ENCODE measurements at regions of chr10 and their contacts with region 1.

Region 1: DNA sequence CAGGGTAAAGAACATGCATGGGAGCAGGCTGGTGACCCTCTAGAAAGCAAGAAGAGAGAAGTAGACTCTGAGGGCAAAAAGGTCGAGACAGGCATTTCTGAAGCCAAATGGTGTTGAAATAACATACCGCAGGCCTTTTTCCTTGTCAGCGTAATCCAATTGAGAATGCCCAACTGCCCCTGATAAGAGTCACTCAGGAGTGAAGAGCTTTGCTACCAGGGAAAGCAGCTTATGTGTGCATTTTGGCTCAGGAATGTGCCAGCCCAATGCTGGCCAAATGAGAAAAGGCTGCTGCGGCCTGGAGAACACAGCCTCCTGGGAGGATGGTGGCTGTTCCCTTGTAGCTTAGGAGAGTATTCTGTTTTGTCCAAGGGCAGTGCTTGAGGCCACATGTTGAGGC is 61.4 kb upstream of the NFKB2 start:
- DNase-seq: no peak
- H3K4me3 Mint-ChIP-seq: no peak overlapping the region
- H3K27ac Mint-ChIP-seq: no peak overlapping the region
- H3K4me1 Mint-ChIP-seq: peaks cover 9% of the 10 kb centered on the region
- H3K27me3 Mint-ChIP-seq: no peaks in the 10 kb centered on the region

Region 2: GRCh38 chr10:101693978-101694673 is 640.0 kb before region 1 on chr10:
- intact Hi-C with region 1: no loop called
- DNase-seq: peak; percentile 93
- H3K4me3 Mint-ChIP-seq: peak overlapping the region; percentile 98
- H3K27ac Mint-ChIP-seq: peak overlapping the region; percentile 99
- H3K4me1 Mint-ChIP-seq: peaks cover 24% of the 10 kb centered on the region
- H3K27me3 Mint-ChIP-seq: no peaks in the 10 kb centered on the region

Region 3: DNA sequence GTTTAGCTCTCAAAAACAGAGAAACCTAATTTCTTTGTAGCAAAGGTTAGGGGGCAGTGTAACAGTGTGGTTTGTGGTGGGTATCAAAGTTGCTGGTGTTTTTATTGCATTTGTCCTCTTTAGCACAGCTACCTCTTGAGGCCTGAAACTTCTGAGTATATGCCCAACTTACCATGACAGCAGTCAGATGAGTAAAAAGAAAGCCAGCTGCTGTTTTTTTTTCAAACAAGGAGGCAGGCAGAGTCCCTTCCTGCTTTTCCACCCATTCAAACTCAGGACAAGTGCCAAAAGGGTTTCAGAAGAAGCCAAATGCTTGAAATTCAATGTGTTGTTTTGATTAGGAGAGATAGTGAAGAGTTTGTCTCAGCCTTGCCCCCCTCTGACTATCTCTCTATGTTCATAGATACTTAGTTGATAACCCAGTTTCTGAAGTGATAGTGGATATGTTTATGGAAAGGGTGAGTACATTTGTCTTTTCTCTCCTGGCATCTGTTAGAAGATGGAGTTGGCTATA is 65.7 kb before region 1 on chr10:
- intact Hi-C with region 1: loop called (anchors 2 kb)
- DNase-seq: no peak
- H3K4me3 Mint-ChIP-seq: peak overlapping the region; percentile 5
- H3K27ac Mint-ChIP-seq: peak overlapping the region; percentile 88
- H3K4me1 Mint-ChIP-seq: peaks cover 30% of the 10 kb centered on the region
- H3K27me3 Mint-ChIP-seq: no peaks in the 10 kb centered on the region

Region 4: GRCh38 chr10:102375250-102375649 is 41.1 kb after region 1 on chr10:
- intact Hi-C with region 1: no loop called
- DNase-seq: peak; percentile 62
- H3K4me3 Mint-ChIP-seq: no peak overlapping the region
- H3K27ac Mint-ChIP-seq: no peak overlapping the region
- H3K4me1 Mint-ChIP-seq: no peaks in the 10 kb centered on the region
- H3K27me3 Mint-ChIP-seq: no peaks in the 10 kb centered on the region

Region 5: DNA sequence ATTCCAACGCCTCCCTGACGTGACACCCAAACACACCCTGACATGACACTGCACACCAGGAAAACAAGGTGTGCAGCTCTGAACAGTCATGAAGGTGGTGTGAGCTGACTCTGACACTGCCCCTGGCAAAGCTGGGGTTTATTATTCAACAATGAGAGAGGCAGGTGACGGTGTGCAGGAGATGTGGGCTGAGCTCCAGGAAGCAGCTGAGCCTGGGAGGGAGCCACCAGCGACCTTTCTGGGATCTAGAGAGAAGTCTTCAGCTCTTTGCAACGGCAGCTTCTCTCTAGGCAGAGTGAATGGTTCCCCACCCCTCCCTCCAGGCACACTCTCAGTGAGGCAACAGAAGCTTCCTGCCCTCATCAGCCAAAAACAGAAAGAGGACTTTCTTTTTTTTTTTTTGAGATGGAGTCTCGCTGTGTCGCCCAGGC is 1455.7 kb after region 1 on chr10:
- intact Hi-C with region 1: no loop called
- DNase-seq: peak; percentile 65
- H3K4me3 Mint-ChIP-seq: no peak overlapping the region
- H3K27ac Mint-ChIP-seq: no peak overlapping the region
- H3K4me1 Mint-ChIP-seq: peaks cover 5% of the 10 kb centered on the region
- H3K27me3 Mint-ChIP-seq: peaks cover 4% of the 10 kb centered on the region